ENCODE measurements at regions of chr1 and their contacts with region 1.

Region 1: GRCh38 chr1:174999216-174999925 is 376 bp upstream of the CACYBP start:
- DNase-seq: peak; percentile 98
- H3K4me3 Mint-ChIP-seq: no peak overlapping the region
- H3K27ac Mint-ChIP-seq: no peak overlapping the region
- H3K4me1 Mint-ChIP-seq: peaks cover 39% of the 10 kb centered on the region
- H3K27me3 Mint-ChIP-seq: no peaks in the 10 kb centered on the region

Region 2: GRCh38 chr1:174800216-174800851 is 199.0 kb before region 1 on chr1:
- CTCF ChIA-PET with region 1: interaction called, 11 read pairs
- POLR2A ChIA-PET with region 1: interaction called, 56 read pairs
- DNase-seq: peak; percentile 23
- H3K4me3 Mint-ChIP-seq: no peak overlapping the region
- H3K27ac Mint-ChIP-seq: no peak overlapping the region
- H3K4me1 Mint-ChIP-seq: peaks cover 13% of the 10 kb centered on the region
- H3K27me3 Mint-ChIP-seq: no peaks in the 10 kb centered on the region

Region 3: DNA sequence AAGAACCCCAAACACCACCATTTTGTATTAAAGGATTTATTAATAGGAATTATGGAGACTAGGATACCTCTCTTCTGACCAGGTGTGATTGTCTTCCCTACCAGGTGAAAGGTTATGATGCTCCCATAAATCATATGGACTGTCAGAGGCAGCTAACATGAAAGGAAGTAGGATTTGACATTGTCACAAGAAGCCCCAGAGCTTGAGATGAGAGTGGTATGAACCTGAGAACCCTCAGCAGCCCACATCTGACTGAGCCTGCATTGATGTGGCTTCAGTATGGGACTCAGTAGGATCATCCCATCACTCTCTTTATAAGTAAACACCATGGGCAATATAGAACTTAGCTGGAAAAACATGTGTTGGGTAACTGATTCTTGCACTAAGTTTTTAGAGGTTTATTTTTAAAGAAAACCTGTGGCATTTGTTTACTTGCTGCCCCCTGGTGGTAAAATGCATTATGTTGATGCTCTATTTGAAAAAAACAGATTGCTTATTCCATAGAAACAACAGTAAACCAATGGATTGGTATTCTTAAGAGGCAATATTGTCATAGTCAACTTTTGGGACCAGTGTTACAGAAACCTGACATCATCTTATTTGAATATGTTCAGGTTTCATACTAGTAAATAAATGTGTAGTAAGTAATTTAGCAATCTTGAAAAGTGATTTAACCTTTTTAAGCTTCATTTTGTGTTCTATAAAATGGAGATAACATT is 16.2 kb before region 1 on chr1:
- CTCF ChIA-PET with region 1: interaction called, 6 read pairs
- POLR2A ChIA-PET with region 1: interaction called, 19 read pairs
- DNase-seq: no peak
- H3K4me3 Mint-ChIP-seq: no peak overlapping the region
- H3K27ac Mint-ChIP-seq: no peak overlapping the region
- H3K4me1 Mint-ChIP-seq: peaks cover 17% of the 10 kb centered on the region
- H3K27me3 Mint-ChIP-seq: no peaks in the 10 kb centered on the region

Region 4: GRCh38 chr1:175023043-175023921 is 23.9 kb after region 1 on chr1 and contains the start of gene MRPS14:
- CTCF ChIA-PET with region 1: interaction called, 35 read pairs
- POLR2A ChIA-PET with region 1: interaction called, 203 read pairs
- DNase-seq: peak; percentile 98
- H3K4me3 Mint-ChIP-seq: peak within 1 kb of the TSS; percentile 89
- H3K27ac Mint-ChIP-seq: peak within 1 kb of the TSS; percentile 81
- H3K4me1 Mint-ChIP-seq: peaks cover 33% of the 10 kb centered on the region
- H3K27me3 Mint-ChIP-seq: no peaks in the 10 kb centered on the region
- total RNA-seq, gene MRPS14: 34.1 TPM

Region 5: DNA sequence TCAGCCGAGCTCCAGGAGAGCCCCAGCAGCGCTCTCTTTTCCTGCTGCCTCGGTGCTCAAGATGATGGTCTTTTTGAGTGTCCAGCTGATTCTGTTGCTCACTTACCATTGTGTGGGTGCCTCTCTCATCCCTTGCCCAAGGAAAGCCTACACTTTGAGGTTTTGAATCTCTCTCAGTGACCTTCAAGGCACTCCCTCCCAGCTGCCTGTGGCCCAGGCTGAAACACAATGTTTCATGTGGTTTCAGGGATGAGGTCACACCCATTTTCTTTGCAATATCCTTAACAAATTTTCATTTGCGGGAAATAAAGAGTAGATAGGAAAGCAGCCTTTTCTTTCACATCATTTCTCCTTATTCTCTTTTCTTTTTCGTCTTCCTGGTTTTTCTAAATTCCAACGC is 36.5 kb after region 1 on chr1:
- CTCF ChIA-PET with region 1: no interaction called
- POLR2A ChIA-PET with region 1: no interaction called
- DNase-seq: no peak
- H3K4me3 Mint-ChIP-seq: no peak overlapping the region
- H3K27ac Mint-ChIP-seq: no peak overlapping the region
- H3K4me1 Mint-ChIP-seq: no peaks in the 10 kb centered on the region
- H3K27me3 Mint-ChIP-seq: peaks cover 1% of the 10 kb centered on the region

Region 6: DNA sequence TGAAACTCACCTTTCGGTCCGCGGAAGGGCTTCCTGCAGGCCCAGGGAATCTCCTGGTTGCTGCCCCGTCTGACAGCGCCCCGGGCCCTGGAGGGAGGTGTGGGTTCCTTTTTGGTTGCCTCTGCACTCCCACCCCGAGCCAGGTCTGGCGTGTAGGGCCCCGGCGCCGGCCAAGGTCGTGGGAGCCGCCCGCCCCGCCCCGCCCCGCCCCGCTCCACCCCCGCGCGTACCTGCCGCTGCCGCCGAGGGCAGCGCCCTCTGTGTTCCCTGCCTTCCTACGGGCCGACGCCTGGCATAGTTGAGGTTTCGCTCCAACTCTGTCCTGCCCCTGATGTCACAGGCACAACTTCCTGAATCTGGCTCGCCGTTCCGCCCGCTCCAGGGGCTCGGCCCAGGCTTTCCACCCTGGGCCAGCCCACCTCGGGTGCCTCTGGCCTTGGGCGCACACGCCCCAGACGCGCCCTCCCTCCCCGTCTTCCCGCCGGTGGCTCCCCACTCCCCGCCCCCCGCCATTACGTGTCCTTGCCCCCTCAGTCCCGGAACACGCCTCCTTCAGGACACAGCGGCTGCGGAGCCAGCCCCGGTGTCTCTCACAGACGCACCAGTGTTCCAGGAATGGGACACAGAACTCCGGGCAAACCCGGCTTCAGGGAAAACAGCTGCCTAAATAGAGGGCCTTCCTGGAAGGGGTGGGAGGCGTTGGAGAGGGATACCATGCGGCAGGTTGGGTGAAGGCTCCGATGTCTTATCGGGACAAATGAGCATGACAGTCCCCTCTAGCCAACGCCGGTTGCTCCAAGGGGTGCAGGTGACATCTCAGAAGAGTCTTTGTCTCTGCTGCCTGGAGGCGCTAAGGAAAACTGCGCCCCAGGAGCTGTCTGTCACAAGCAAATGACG is 193.5 kb after region 1 on chr1 and contains the start of gene KIAA0040:
- CTCF ChIA-PET with region 1: no interaction called
- POLR2A ChIA-PET with region 1: interaction called, 30 read pairs
- DNase-seq: peak; percentile 65
- H3K4me3 Mint-ChIP-seq: peak within 1 kb of the TSS; percentile 95
- H3K27ac Mint-ChIP-seq: peak within 1 kb of the TSS; percentile 93
- H3K4me1 Mint-ChIP-seq: peaks cover 52% of the 10 kb centered on the region
- H3K27me3 Mint-ChIP-seq: no peaks in the 10 kb centered on the region
- total RNA-seq, gene KIAA0040: 79.4 to 80.2 TPM

Region 7: DNA sequence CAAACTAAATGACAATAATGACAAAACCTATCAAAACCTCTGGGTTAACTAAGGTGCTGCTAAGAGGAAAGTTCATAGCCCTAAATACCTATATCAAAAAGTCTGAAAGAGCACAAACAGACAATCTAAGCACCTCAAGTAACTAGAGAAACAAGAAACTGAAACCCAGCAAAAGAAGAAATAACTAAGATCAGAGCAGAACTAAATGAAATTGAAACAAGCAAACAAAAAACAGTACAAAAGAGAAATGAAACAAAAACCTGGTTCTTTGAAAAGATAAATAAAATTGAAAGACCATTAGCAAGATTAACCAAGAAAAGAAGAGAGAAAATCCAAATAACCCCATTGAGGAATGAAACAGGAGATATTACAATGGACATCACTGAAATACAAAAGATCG is 238.0 kb after region 1 on chr1:
- CTCF ChIA-PET with region 1: no interaction called
- POLR2A ChIA-PET with region 1: no interaction called
- DNase-seq: no peak
- H3K4me3 Mint-ChIP-seq: no peak overlapping the region
- H3K27ac Mint-ChIP-seq: peak overlapping the region; percentile 16
- H3K4me1 Mint-ChIP-seq: peaks cover 28% of the 10 kb centered on the region
- H3K27me3 Mint-ChIP-seq: no peaks in the 10 kb centered on the region

Measured in activated CD4-positive, alpha-beta memory T cell treated with anti-CD3 and anti-CD28 coated beads, Interleukin-2, amount 10 ng/mL, durations not matched to agents 7 days and 5 days (primary cell).